ENCODE measurements at regions of chr12 and their contacts with region 1.

Region 1: GRCh38 chr12:26884765-26885576 is 52.0 kb upstream of the ITPR2 start:
- DNase-seq: peak; percentile 42
- H3K4me3 ChIP-seq: no peak overlapping the region
- H3K27ac ChIP-seq: no peak overlapping the region
- H3K27me3 ChIP-seq: no peaks in the 10 kb centered on the region
- CTCF ChIP-seq: peak; percentile 99

Region 2: DNA sequence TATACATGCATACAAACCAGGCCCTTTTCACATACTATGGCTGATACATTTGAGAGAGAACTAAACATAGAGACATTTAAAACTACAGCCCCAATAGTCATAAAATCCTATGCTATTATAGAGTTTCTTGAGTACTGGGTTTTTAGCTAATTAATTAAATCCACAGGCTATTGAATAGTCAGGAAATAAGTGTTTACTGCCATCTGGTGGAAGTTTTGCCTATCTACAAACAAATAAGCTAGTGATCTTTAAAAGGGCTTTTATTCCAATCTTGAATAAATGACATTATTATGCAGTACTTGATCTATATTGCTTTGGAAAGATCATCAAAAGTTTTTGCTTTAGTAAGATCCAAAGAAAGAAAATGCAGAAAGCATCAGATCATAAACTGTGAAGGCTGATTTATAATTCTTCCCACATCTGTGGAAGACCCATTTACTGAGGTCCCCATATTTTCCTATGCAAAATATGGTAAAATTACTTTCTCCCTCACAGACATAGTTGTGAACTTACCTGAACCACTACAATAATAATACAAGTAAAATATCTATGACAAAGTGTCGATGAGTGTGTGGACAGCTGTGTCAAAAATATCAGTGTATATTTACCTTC is 183.3 kb before region 1 on chr12:
- CTCF ChIA-PET with region 1: interaction called, 17 read pairs
- POLR2A ChIA-PET with region 1: no interaction called
- DNase-seq: no peak
- H3K4me3 ChIP-seq: no peak overlapping the region
- H3K27ac ChIP-seq: no peak overlapping the region
- H3K27me3 ChIP-seq: no peaks in the 10 kb centered on the region
- CTCF ChIP-seq: peak; percentile 64

Region 3: GRCh38 chr12:26853303-26854030 is 31.5 kb before region 1 on chr12:
- CTCF ChIA-PET with region 1: interaction called, 21 read pairs
- POLR2A ChIA-PET with region 1: no interaction called
- DNase-seq: no peak
- H3K4me3 ChIP-seq: no peak overlapping the region
- H3K27ac ChIP-seq: no peak overlapping the region
- H3K27me3 ChIP-seq: peaks cover 4% of the 10 kb centered on the region
- CTCF ChIP-seq: peak; percentile 92

Region 4: GRCh38 chr12:26870491-26871419 is 14.2 kb before region 1 on chr12:
- CTCF ChIA-PET with region 1: interaction called, 27 read pairs
- POLR2A ChIA-PET with region 1: no interaction called
- DNase-seq: peak; percentile 23
- H3K4me3 ChIP-seq: no peak overlapping the region
- H3K27ac ChIP-seq: no peak overlapping the region
- H3K27me3 ChIP-seq: peaks cover 12% of the 10 kb centered on the region
- CTCF ChIP-seq: no peak

Region 5: DNA sequence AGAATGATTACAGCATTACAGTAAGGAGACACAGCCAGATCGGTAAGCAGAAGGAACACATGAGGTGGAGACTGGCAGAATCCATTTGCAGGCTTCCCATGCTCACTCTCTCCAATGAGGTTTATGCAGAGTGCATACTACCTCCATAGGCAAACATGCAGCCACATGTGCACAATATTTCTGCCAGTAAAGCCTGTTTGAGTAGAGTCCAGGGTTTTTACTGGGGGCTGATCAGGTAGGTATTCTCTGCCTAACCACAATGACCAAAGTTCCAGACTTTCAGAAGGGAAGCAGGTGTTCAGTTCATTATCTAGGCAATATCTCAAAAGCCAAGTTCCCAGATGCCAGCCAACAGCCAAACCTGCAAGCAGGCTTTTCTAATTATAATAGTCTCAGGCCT is 21.7 kb after region 1 on chr12:
- CTCF ChIA-PET with region 1: interaction called, 17 read pairs
- POLR2A ChIA-PET with region 1: no interaction called
- DNase-seq: no peak
- H3K4me3 ChIP-seq: no peak overlapping the region
- H3K27ac ChIP-seq: no peak overlapping the region
- H3K27me3 ChIP-seq: no peaks in the 10 kb centered on the region
- CTCF ChIP-seq: no peak

Region 6: GRCh38 chr12:27305673-27306456 is 420.9 kb after region 1 on chr12:
- CTCF ChIA-PET with region 1: interaction called, 10 read pairs
- POLR2A ChIA-PET with region 1: no interaction called
- DNase-seq: no peak
- H3K4me3 ChIP-seq: no peak overlapping the region
- H3K27ac ChIP-seq: no peak overlapping the region
- H3K27me3 ChIP-seq: no peaks in the 10 kb centered on the region
- CTCF ChIP-seq: peak; percentile 47